Activated CD4-positive, alpha-beta T cell treated with anti-CD3 and anti-CD28 coated beads for 36 hours (primary cell): ENCODE measurements at regions of chr11 and their contacts with region 1.

Region 1: DNA sequence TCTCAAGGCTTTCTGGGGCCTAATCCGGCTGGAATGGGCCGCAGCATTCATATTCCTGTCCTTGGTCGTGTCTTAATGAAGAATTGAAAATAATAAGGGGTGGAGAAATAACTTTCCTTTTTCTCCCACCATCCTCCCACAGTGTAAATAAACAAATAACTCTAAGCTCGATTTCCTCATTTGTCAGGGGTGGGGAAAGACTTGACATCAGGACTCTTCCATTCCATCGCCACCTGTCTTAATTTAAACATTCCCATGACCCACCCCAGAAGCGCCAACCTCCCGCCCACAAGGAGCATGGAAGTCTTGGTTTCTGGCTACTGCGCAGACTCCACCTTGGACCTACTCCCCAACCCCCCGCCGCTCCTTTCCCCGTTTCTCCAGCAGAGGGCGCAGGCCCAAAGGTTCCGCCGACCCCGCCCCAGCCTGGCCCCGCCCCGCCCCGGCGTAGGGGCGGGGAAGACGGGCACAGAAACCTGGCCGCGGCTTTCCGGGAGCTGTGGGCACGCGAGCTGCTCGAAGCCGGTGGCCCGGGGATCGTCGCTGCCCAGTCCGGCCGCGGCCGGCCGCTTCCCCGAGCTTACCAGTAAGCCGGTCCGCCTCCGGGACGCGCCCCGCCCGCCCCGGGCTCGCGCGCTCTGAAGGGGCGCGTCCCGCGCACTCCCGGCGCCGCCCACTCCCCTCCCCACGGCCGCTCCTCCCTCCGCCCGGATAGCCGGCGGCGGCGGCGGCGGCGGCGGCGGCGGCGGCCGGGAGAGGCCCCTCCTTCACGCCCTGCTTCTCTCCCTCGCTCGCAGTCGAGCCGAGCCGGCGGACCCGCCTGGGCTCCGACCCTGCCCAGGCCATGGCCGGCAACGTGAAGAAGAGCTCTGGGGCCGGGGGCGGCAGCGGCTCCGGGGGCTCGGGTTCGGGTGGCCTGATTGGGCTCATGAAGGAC is at the start of gene CBL:
- DNase-seq: peak; percentile 99
- ATAC-seq: peak; percentile 85
- H3K4me3 Mint-ChIP-seq: peak within 1 kb of the TSS; percentile 98
- H3K27ac Mint-ChIP-seq: peak within 1 kb of the TSS; percentile 94
- H3K4me1 Mint-ChIP-seq: peaks cover 27% of the 10 kb centered on the region
- H3K27me3 Mint-ChIP-seq: no peaks in the 10 kb centered on the region
- total RNA-seq, gene CBL: 29.3 to 33.2 TPM

Region 2: DNA sequence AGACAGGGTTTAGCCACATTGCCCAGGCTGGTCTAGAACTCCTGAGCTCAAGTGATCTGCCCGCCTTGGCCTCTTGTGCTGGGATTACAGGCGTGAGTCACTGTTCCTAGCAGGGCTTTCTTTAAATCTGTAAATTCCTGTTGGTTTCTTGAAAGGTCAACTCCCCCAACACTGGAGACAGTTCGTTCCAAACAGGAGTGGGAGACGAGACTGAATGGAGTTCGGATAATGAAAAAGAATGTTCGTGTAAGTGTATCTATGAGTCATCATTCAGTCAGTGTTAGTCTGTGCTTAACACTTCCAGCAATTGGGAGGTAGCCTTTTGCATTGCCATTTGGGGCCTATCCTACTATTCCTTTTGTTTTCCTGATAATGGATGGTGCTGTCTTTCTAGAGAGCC is 1924.7 kb before region 1 on chr11:
- CTCF ChIA-PET with region 1: no interaction called
- POLR2A ChIA-PET with region 1: no interaction called
- intact Hi-C with region 1: no loop called
- DNase-seq: no peak
- ATAC-seq: no peak
- H3K4me3 Mint-ChIP-seq: no peak overlapping the region
- H3K27ac Mint-ChIP-seq: no peak overlapping the region
- H3K4me1 Mint-ChIP-seq: peaks cover 15% of the 10 kb centered on the region
- H3K27me3 Mint-ChIP-seq: no peaks in the 10 kb centered on the region

Region 3: GRCh38 chr11:119057000-119057769 is 148.7 kb before region 1 on chr11 and contains the start of gene HYOU1:
- CTCF ChIA-PET with region 1: no interaction called
- POLR2A ChIA-PET with region 1: no interaction called
- intact Hi-C with region 1: loop called in 1 of 2 experiments (anchors 1 kb)
- DNase-seq: peak; percentile 100
- ATAC-seq: peak; percentile 96
- H3K4me3 Mint-ChIP-seq: peak within 1 kb of the TSS; percentile 82
- H3K27ac Mint-ChIP-seq: peak within 1 kb of the TSS; percentile 94
- H3K4me1 Mint-ChIP-seq: peaks cover 34% of the 10 kb centered on the region
- H3K27me3 Mint-ChIP-seq: no peaks in the 10 kb centered on the region
- total RNA-seq, gene HYOU1: 104 to 114 TPM

Region 4: GRCh38 chr11:119101759-119102423 is 104.0 kb before region 1 on chr11 and contains the start of gene DPAGT1:
- CTCF ChIA-PET with region 1: interaction called, 8 read pairs
- POLR2A ChIA-PET with region 1: no interaction called
- intact Hi-C with region 1: loop called in 1 of 2 experiments (anchors 1 kb)
- DNase-seq: peak; percentile 93
- ATAC-seq: peak; percentile 86
- H3K4me3 Mint-ChIP-seq: peak within 1 kb of the TSS; percentile 95
- H3K27ac Mint-ChIP-seq: peak within 1 kb of the TSS; percentile 100
- H3K4me1 Mint-ChIP-seq: peaks cover 42% of the 10 kb centered on the region
- H3K27me3 Mint-ChIP-seq: no peaks in the 10 kb centered on the region
- total RNA-seq, gene DPAGT1: 57.8 to 73.5 TPM

Region 5: GRCh38 chr11:119168471-119169281 is 37.2 kb before region 1 on chr11 and contains the start of gene NLRX1:
- CTCF ChIA-PET with region 1: no interaction called
- POLR2A ChIA-PET with region 1: no interaction called
- intact Hi-C with region 1: loop called in 1 of 2 experiments (anchors 1 kb)
- DNase-seq: peak; percentile 93
- ATAC-seq: peak; percentile 94
- H3K4me3 Mint-ChIP-seq: peak within 1 kb of the TSS; percentile 88
- H3K27ac Mint-ChIP-seq: peak within 1 kb of the TSS; percentile 90
- H3K4me1 Mint-ChIP-seq: peaks cover 11% of the 10 kb centered on the region
- H3K27me3 Mint-ChIP-seq: no peaks in the 10 kb centered on the region
- total RNA-seq, gene NLRX1: 18.2 to 25.0 TPM

Region 6: GRCh38 chr11:119262668-119263351 is 57.0 kb after region 1 on chr11:
- CTCF ChIA-PET with region 1: interaction called, 8 read pairs
- POLR2A ChIA-PET with region 1: no interaction called
- intact Hi-C with region 1: loop called (anchors 1 to 5 kb)
- DNase-seq: no peak
- ATAC-seq: peak; percentile 80
- H3K4me3 Mint-ChIP-seq: no peak overlapping the region
- H3K27ac Mint-ChIP-seq: no peak overlapping the region
- H3K4me1 Mint-ChIP-seq: peaks cover 66% of the 10 kb centered on the region
- H3K27me3 Mint-ChIP-seq: no peaks in the 10 kb centered on the region

Region 7: DNA sequence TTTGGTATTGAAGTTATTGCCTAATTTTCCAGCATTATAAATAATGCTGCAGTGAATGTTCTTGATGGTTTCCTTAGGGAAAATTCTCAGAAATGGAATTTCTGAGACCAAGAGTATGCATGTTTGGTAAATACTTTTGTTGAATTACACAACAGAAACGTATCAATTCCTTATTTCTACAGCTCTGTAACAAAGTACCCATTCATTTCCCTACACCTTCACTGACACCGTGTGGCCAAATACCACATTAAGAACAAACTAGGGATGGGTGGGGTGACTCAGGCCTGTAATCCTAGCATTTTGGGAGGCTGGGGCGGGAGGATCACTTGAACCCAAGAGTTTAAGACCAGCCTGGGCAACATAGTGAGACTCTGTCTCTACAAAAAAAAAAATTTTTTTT is 89.3 kb after region 1 on chr11:
- CTCF ChIA-PET with region 1: interaction called, 3 read pairs
- POLR2A ChIA-PET with region 1: interaction called, 11 read pairs
- intact Hi-C with region 1: no loop called
- DNase-seq: no peak
- ATAC-seq: no peak
- H3K4me3 Mint-ChIP-seq: no peak overlapping the region
- H3K27ac Mint-ChIP-seq: no peak overlapping the region
- H3K4me1 Mint-ChIP-seq: no peaks in the 10 kb centered on the region
- H3K27me3 Mint-ChIP-seq: no peaks in the 10 kb centered on the region

Region 8: DNA sequence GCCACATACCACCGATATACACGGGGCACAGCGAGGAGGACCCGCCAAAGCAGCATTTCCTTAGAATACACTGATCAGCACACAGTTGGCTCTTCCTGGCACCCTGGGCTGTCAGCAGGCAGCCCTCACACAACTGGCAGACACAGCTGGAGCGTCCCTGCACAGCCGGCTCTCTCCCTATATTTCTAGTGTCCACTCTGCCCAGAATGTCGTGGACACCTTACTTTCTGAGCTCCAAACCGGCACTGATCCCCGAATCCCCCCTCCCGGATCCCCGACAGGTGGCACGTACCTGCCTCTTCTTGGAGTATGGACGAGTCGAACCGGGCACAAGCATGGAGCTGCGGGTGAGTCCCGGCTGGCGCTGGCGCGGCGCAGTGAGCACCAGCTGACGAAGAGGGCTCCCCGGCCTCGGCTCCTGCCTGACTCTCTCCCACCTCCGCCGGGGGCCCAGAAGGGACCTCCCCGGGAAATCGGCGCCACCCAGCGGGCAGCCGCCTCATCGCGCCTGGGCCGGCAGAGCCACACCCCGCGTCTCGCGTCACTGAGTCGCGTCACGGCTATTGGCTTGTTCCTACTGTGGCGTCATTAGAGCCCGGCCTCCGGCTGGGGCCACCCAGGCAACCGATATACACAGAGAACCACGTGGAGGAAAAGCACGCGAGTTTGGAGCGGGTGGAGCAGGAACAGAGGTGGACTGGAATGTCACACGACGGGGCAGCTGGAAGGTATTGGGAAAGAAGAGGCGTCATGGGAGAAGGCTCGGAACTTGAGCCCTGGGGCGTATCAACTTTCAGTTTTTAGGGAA is 175.5 kb after region 1 on chr11 and contains the start of gene USP2:
- CTCF ChIA-PET with region 1: no interaction called
- POLR2A ChIA-PET with region 1: no interaction called
- intact Hi-C with region 1: loop called in 1 of 2 experiments (anchors 1 kb)
- DNase-seq: peak; percentile 98
- ATAC-seq: peak; percentile 98
- H3K4me3 Mint-ChIP-seq: no peak within 1 kb of the TSS
- H3K27ac Mint-ChIP-seq: peak within 1 kb of the TSS; percentile 18
- H3K4me1 Mint-ChIP-seq: peaks cover 7% of the 10 kb centered on the region
- H3K27me3 Mint-ChIP-seq: no peaks in the 10 kb centered on the region
- total RNA-seq, gene USP2: 0.58 to 0.71 TPM

Region 9: GRCh38 chr11:119403021-119403420 is 197.2 kb after region 1 on chr11:
- CTCF ChIA-PET with region 1: no interaction called
- POLR2A ChIA-PET with region 1: no interaction called
- intact Hi-C with region 1: no loop called
- DNase-seq: no peak
- ATAC-seq: no peak
- H3K4me3 Mint-ChIP-seq: no peak overlapping the region
- H3K27ac Mint-ChIP-seq: no peak overlapping the region
- H3K4me1 Mint-ChIP-seq: no peaks in the 10 kb centered on the region
- H3K27me3 Mint-ChIP-seq: peaks cover 13% of the 10 kb centered on the region